MCF 10A (cell line): ENCODE measurements at regions of chr20 and their contacts with region 1.

Region 1: GRCh38 chr20:25065625-25066338 is 7.8 kb upstream of the ACSS1 start:
- DNase-seq: peak; percentile 59
- H3K4me3 Mint-ChIP-seq: no peak overlapping the region
- H3K27ac Mint-ChIP-seq: no peak overlapping the region
- H3K4me1 Mint-ChIP-seq: peaks cover 12% of the 10 kb centered on the region
- H3K27me3 Mint-ChIP-seq: peaks cover 68% of the 10 kb centered on the region
- CTCF ChIP-seq: peak; percentile 57

Region 2: DNA sequence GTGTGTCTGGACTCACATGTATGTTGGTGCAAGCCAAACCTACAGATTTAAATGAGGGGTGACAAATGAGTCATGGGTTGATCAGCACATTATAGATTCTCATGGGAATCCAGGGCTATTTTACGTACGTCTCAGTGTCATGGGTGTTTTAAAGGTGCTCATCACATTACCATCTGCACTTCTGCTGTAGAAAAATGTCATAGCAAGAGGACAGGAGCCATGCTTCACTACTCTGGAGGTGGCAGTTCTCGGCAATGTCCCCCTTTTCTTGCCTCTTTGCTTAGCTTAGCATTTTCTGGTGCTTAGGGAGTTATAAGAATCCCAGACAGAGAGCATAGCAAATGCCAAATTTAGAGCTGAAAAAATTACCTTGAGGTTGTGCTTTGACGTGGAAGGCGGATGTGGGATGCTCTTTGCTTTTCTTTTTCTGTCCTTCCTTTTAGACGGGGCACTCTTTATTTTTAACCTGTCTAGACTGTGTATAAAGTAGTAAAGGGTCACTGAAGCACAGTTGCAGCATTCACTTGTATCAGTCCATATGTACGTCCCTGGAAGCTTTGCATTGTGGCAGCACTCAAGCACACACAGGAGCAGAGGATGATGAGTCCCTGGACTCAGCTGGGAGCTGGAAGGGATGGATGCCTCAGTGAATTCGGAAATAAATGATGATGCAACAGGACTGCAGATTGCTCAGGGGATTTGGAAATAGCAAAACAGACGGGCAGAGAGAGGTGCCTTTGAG is 456.7 kb before region 1 on chr20:
- CTCF ChIA-PET with region 1: no interaction called
- POLR2A ChIA-PET with region 1: no interaction called
- intact Hi-C with region 1: no loop called
- DNase-seq: peak; percentile 32
- H3K4me3 Mint-ChIP-seq: no peak overlapping the region
- H3K27ac Mint-ChIP-seq: no peak overlapping the region
- H3K4me1 Mint-ChIP-seq: no peaks in the 10 kb centered on the region
- H3K27me3 Mint-ChIP-seq: no peaks in the 10 kb centered on the region
- CTCF ChIP-seq: no peak

Region 3: DNA sequence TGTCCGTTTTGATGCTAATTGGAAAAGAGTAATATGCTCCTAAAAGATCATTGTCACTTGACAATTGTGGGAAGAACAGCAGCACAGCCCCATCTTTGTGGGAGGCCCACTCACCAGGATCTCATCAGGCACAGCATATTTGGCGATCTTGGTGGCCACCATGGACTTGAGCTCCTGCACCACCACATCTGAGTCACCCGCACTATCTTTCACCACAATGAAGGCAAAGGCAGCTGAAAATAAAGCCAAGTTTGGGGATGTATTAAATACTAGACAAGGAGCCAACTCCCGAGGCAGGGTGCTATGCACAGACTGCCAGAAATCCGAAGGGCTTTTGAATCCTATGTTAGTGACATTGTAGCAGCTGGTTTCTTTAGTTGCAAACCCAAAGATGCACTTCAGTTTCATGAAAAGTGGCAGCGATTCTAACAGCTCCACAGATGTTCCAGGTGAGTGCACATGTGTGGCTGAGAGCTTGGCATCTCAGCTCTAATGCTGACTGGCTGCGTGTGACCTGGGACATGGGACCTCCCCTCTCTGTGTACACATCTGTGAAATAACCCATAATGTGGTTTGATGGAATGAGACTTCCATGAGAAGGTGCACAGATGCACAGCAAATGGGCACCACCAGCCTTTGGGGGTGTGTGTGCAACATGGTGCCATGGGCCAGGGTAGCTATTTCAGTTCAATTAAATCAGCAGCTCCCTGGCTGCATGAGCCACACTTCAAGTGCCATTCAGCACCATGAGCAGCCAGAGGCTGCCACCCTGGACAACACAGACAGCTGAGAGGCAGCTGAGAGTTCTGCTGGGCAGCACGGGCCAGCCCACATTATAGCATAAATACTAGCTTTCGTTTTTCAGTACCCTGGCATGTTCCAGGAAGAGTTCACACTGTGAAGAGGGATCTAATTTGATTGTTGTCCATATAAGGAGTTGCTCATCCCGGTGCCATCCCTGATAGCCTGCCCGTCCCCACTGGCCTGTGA is 56.3 kb before region 1 on chr20:
- CTCF ChIA-PET with region 1: interaction called, 13 read pairs
- POLR2A ChIA-PET with region 1: interaction called, 3 read pairs
- intact Hi-C with region 1: no loop called
- DNase-seq: no peak
- H3K4me3 Mint-ChIP-seq: no peak overlapping the region
- H3K27ac Mint-ChIP-seq: no peak overlapping the region
- H3K4me1 Mint-ChIP-seq: no peaks in the 10 kb centered on the region
- H3K27me3 Mint-ChIP-seq: peaks cover 11% of the 10 kb centered on the region
- CTCF ChIP-seq: no peak

Region 4: GRCh38 chr20:25032478-25033280 is 33.1 kb before region 1 on chr20:
- CTCF ChIA-PET with region 1: interaction called, 24 read pairs
- POLR2A ChIA-PET with region 1: interaction called, 3 read pairs
- intact Hi-C with region 1: no loop called
- DNase-seq: no peak
- H3K4me3 Mint-ChIP-seq: no peak overlapping the region
- H3K27ac Mint-ChIP-seq: no peak overlapping the region
- H3K4me1 Mint-ChIP-seq: peaks cover 16% of the 10 kb centered on the region
- H3K27me3 Mint-ChIP-seq: no peaks in the 10 kb centered on the region
- CTCF ChIP-seq: no peak

Region 5: GRCh38 chr20:25076731-25077609 is 11.2 kb after region 1 on chr20:
- CTCF ChIA-PET with region 1: interaction called, 26 read pairs
- POLR2A ChIA-PET with region 1: no interaction called
- intact Hi-C with region 1: no loop called
- DNase-seq: peak; percentile 86
- H3K4me3 Mint-ChIP-seq: no peak overlapping the region
- H3K27ac Mint-ChIP-seq: no peak overlapping the region
- H3K4me1 Mint-ChIP-seq: peaks cover 13% of the 10 kb centered on the region
- H3K27me3 Mint-ChIP-seq: peaks cover 46% of the 10 kb centered on the region
- CTCF ChIP-seq: peak; percentile 34